ENCODE measurements at regions of chr11 and their contacts with region 1.

Region 1: DNA sequence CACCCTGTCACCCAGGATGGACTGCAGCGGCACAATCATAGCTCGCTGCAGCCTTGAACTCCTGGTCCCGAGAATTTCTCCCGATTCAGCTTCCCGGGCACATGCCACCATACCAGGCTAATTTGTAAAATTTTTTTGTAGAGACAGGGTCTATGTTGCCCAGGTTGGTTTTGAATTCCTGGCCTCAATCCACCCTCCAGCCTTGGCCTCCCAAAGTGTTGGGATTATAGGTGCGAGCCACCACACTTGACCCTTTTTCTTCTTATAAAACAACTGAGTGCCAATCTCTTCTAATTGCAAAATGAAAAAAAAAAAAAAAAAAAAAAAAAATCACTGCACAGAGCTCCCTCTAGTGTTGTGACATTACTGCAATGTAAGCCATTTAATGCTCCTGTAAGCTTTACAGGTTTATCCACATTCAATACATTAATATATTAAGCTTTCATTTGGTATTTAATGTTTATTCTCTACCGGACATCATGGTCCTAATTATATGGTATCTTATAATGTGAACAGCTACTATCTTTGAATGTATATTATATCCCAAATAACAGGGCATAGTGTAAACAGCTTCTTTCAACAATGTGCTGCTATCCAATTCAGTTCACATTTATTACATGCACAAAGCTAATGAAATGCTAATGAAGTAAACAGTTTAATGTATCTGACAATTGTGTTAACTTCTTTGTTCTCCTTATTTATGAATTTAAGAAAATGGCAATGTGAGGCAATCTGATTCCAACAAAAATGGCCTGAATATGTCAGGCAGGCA is 44.6 kb downstream of the COPB1 start:
- DNase-seq: no peak
- H3K4me3 ChIP-seq: no peak overlapping the region
- H3K27ac ChIP-seq: no peak overlapping the region
- H3K4me1 ChIP-seq: no peaks in the 10 kb centered on the region
- H3K27me3 ChIP-seq: no peaks in the 10 kb centered on the region
- CTCF ChIP-seq: peak in 2 of 4 experiments; percentile 44 to 49
- POLR2A ChIP-seq: no peak

Region 2: GRCh38 chr11:13970986-13971385 is 484.1 kb before region 1 on chr11:
- intact Hi-C with region 1: loop called (anchors 10 kb)
- DNase-seq: no peak
- H3K4me3 ChIP-seq: no peak overlapping the region
- H3K27ac ChIP-seq: no peak overlapping the region
- H3K4me1 ChIP-seq: no peaks in the 10 kb centered on the region
- H3K27me3 ChIP-seq: no peaks in the 10 kb centered on the region
- CTCF ChIP-seq: peak in 2 of 4 experiments; percentile 31 to 64
- POLR2A ChIP-seq: no peak

Region 3: DNA sequence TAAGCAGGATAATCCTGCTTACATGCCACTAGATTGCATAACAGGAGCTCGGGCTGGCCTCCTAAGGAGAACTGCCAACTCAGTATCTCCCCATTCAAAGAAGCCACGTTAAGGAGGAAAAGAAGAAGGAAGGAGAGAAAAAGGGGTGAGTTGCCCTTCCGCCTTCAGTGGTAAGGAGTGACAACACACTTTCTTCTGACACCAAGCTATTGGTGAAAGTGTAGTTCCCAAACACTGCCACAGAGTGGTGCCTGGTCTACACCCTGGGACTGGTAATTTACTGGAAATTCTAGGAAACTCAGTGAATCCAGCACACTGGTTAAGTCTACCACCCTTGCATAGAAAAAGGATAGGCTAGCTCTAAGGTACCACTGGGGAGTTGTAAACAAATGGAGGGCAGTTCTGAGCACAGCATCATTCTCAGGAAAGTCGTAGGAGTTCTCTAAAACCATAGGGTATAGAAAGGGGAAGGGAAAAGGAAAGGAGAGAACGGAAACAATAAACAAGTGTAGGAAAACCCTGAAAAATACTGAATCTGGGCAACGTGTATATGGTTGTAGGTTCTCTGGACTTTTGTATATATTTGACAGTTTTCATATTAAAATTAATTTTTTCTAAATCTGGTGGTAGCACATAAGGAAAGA is 154.3 kb before region 1 on chr11:
- intact Hi-C with region 1: loop called (anchors 5 kb)
- DNase-seq: peak; percentile 42
- H3K4me3 ChIP-seq: no peak overlapping the region
- H3K27ac ChIP-seq: no peak overlapping the region
- H3K4me1 ChIP-seq: no peaks in the 10 kb centered on the region
- H3K27me3 ChIP-seq: no peaks in the 10 kb centered on the region
- CTCF ChIP-seq: peak; percentile 22 to 77 (median 63)
- POLR2A ChIP-seq: no peak

Region 4: GRCh38 chr11:14358729-14359439 is 96.2 kb before region 1 on chr11 and contains the start of gene RRAS2:
- intact Hi-C with region 1: loop called (anchors 5 kb)
- DNase-seq: peak; percentile 84
- H3K4me3 ChIP-seq: peak within 1 kb of the TSS; percentile 87 to 92
- H3K27ac ChIP-seq: peak within 1 kb of the TSS; percentile 78 to 85
- H3K4me1 ChIP-seq: no peaks in the 10 kb centered on the region
- H3K27me3 ChIP-seq: no peaks in the 10 kb centered on the region
- CTCF ChIP-seq: peak in 2 of 4 experiments; percentile 20 to 22
- POLR2A ChIP-seq: peak; percentile 96
- total RNA-seq, gene RRAS2: 40.5 to 59.6 TPM

Region 5: GRCh38 chr11:14380947-14381561 is 74.0 kb before region 1 on chr11:
- intact Hi-C with region 1: loop called (anchors 5 kb)
- DNase-seq: peak; percentile 72
- H3K4me3 ChIP-seq: peak overlapping the region; percentile 38 to 43
- H3K27ac ChIP-seq: peak overlapping the region; percentile 78 to 83
- H3K4me1 ChIP-seq: no peaks in the 10 kb centered on the region
- H3K27me3 ChIP-seq: no peaks in the 10 kb centered on the region
- CTCF ChIP-seq: peak in 1 of 4 experiments; percentile 12
- POLR2A ChIP-seq: no peak

Region 6: GRCh38 chr11:14513800-14514199 is 58.8 kb after region 1 on chr11:
- intact Hi-C with region 1: no loop called
- DNase-seq: no peak
- H3K4me3 ChIP-seq: no peak overlapping the region
- H3K27ac ChIP-seq: no peak overlapping the region
- H3K4me1 ChIP-seq: no peaks in the 10 kb centered on the region
- H3K27me3 ChIP-seq: no peaks in the 10 kb centered on the region
- CTCF ChIP-seq: no peak
- POLR2A ChIP-seq: no peak

Region 7: DNA sequence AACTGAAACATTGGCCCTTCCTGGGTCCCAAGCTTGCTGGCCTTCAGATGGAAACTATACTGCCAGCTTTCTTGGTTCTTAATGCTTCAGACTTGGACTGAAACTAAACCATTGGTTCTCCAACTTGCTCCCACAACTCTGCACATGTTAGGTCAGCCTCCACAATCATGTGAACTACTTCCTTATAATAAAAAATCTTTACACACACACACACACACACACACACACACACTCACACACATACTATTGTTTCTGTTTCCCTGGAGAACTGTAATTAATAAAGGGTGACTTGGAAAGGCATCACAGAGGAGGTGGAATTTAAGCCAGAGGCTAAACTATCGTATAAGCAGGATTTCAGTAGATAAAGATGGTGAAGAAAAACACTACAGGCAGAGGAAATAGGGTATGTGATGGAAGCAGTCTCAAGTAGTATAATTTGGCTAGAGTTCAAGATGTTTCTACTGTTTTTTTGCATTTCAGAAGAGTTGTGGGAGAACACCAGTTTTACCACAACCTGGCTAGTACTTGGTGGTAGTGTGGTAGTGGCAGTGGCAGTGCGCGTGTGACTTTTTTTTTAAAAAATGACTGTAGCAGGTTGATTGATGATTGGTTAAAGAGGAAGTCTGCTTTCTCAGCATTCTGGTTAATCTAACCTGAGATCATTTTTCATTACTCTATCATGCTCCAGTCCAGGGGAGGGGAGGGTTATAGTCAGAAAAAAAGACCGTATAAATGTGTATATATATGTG is 258.6 kb after region 1 on chr11:
- intact Hi-C with region 1: no loop called
- DNase-seq: no peak
- H3K4me3 ChIP-seq: no peak overlapping the region
- H3K27ac ChIP-seq: no peak overlapping the region
- H3K4me1 ChIP-seq: no peaks in the 10 kb centered on the region
- H3K27me3 ChIP-seq: no peaks in the 10 kb centered on the region
- CTCF ChIP-seq: no peak
- POLR2A ChIP-seq: no peak

Measured in prostate gland (tissue), 2 donors.